PC-9 (cell line): ENCODE measurements at regions of chr18 and their contacts with region 1.

Region 1: DNA sequence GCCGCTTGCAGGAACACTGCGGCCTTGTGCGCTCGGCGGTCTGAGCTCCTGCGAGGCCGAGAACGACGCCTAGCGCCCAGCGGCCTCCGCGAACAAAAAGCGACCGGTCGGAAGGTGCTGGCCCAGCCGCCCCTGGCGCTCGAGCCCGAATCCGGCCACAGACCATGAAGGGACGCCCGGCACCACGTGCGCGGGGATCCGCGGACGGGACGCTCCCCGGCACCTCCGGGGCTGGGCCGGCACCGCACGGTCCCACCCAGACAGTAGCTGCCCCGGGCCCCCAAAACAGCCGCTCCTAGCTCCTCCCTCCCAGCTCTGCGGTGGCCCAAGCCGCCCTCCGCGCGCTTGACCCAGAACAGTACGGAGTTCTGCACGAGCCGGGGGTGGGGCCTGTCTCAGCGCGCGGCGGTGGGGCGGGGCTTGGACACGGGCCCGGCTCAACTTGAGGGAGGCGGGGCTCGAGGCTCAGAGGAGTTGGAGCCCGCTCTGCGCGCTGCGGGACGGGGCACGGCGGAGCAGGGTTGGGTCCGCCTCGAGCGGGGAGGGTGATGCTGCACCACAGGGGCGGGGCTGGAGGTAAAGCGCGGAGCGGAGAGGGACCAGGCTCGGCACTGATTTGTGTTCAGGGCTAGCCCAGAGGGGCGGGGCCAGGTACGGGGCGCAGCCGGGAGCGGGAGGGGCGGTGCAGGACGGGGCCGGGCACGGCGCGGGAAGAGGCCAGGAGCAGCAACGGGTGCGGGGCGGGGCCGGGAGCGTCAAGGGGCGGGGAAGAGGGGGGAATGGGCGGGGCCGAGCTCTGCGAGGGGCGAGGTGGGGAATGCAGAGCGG is 538 bp upstream of the IMPA2 start:
- DNase-seq: peak; percentile 95 to 100
- H3K4me3 ChIP-seq: peak overlapping the region; percentile 69
- H3K27ac ChIP-seq: peak overlapping the region; percentile 84
- H3K4me1 ChIP-seq: peaks cover 31% of the 10 kb centered on the region
- H3K27me3 ChIP-seq: no peaks in the 10 kb centered on the region
- CTCF ChIP-seq: no peak

Region 2: DNA sequence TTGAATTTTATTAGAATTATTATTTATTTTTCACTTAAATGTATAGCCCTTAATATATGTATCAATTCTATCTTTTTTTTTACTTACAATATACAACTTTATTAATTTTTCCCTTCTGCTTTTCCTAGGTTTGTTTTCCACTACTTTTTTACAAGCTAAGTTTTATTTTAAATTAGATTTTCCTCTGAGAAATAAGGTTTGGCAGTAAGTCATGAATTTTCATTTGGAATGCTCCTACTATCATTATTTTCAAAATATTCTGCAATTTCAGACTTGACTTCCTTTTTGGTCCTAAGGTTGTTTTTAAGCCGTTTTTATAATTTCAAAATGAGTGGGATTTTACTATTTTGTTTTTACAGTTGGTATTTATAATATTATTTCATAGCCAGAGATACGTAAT is 608.6 kb before region 1 on chr18:
- CTCF ChIA-PET with region 1: no interaction called
- POLR2A ChIA-PET with region 1: interaction called, 10 read pairs
- intact Hi-C with region 1: no loop called
- DNase-seq: no peak
- H3K4me3 ChIP-seq: no peak overlapping the region
- H3K27ac ChIP-seq: no peak overlapping the region
- H3K4me1 ChIP-seq: no peaks in the 10 kb centered on the region
- H3K27me3 ChIP-seq: peaks cover 21% of the 10 kb centered on the region
- CTCF ChIP-seq: no peak

Region 3: GRCh38 chr18:11887305-11888262 is 93.2 kb before region 1 on chr18:
- CTCF ChIA-PET with region 1: interaction called, 11 read pairs
- POLR2A ChIA-PET with region 1: interaction called, 5 read pairs
- intact Hi-C with region 1: no loop called
- DNase-seq: peak; percentile 61 to 95
- H3K4me3 ChIP-seq: no peak overlapping the region
- H3K27ac ChIP-seq: peak overlapping the region; percentile 60
- H3K4me1 ChIP-seq: peaks cover 24% of the 10 kb centered on the region
- H3K27me3 ChIP-seq: no peaks in the 10 kb centered on the region
- CTCF ChIP-seq: no peak

Region 4: GRCh38 chr18:11937874-11938478 is 42.8 kb before region 1 on chr18:
- CTCF ChIA-PET with region 1: interaction called, 15 read pairs
- POLR2A ChIA-PET with region 1: interaction called, 20 read pairs
- intact Hi-C with region 1: no loop called
- DNase-seq: peak; percentile 61 to 70
- H3K4me3 ChIP-seq: no peak overlapping the region
- H3K27ac ChIP-seq: no peak overlapping the region
- H3K4me1 ChIP-seq: no peaks in the 10 kb centered on the region
- H3K27me3 ChIP-seq: no peaks in the 10 kb centered on the region
- CTCF ChIP-seq: peak; percentile 85

Region 5: DNA sequence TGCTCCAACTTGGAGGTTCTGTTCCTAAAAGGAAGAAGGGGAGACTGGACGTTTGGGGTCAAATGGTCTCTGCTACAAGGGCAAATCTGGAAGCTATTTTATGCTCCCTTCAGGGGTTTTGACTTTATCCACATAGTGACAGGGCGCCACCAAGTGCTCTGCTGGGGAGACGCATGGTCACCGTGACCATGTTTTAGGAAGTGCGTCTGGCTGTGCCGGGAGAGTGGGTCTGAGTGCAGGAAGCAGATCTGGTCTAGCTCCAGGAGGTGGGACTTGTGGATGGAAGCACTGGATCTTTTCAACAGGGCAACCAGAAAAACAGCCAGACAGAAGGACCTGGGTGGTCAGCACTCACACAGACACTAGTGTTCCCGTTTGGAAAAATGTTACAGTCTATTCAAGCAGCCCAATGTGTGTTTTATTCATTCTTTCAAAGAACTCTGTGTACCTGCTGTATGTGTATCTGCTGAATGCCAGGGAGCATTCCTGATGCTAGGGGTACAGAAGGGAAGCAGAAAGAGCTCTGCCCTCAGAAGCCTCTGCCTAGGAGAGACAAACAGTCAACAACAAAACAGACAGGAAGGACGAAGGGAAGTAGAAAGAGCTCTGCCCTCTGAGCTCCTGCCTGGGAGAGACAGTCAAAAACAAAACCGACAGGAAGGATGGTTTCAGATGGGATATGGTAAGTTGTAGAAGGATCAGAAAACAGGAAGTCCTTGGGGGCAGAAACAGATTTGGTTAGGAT is 14.8 kb after region 1 on chr18:
- CTCF ChIA-PET with region 1: interaction called, 12 read pairs
- POLR2A ChIA-PET with region 1: interaction called, 5 read pairs
- intact Hi-C with region 1: no loop called
- DNase-seq: peak; percentile 49 to 70
- H3K4me3 ChIP-seq: no peak overlapping the region
- H3K27ac ChIP-seq: no peak overlapping the region
- H3K4me1 ChIP-seq: peaks cover 17% of the 10 kb centered on the region
- H3K27me3 ChIP-seq: no peaks in the 10 kb centered on the region
- CTCF ChIP-seq: peak; percentile 84

Region 6: DNA sequence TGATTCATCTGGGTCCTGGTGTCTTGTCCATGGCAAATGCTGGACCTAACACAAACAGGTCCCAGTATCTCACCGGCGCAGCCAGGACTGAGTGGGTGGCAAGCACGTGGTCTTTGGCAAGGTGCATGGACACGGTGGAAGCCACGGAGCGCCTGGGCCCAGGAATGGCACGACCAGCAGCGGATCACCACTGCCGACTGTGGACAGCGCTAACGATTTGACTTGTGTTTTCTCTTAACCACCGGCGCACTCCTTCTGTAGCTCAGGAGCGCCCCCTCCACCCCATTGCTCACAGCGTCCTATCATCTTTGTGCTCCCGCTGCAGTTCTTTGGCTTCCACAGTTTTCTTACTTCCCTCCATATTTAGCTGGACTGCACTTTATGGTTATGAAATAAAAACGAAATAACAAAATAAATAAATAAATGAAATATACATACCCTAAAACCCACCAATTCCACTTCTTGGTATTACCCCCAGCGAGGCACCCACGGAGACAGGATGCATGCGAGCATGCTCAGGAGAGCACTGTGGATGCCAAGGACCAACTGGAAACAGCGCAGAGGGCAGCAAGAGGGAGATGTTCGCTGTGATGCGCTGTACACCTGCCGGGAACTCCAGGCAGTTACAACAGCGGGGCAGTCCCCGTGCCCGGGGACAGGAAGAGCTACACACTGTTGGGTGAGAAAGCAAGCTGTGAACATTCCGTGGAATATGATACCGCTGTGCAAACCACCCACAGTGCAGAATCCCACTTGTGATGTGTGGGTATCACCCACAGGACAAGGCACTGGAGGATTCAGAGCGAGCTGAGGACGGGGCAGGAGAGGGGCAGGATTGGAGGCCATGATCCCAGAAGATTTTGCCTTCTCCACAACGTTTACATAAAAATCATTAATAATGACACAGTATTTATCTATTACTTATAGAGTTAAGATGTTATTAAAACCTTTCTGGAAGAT is 266.4 kb after region 1 on chr18:
- CTCF ChIA-PET with region 1: no interaction called
- POLR2A ChIA-PET with region 1: no interaction called
- intact Hi-C with region 1: no loop called
- DNase-seq: no peak
- H3K4me3 ChIP-seq: no peak overlapping the region
- H3K27ac ChIP-seq: no peak overlapping the region
- H3K4me1 ChIP-seq: no peaks in the 10 kb centered on the region
- H3K27me3 ChIP-seq: no peaks in the 10 kb centered on the region
- CTCF ChIP-seq: no peak

Region 7: DNA sequence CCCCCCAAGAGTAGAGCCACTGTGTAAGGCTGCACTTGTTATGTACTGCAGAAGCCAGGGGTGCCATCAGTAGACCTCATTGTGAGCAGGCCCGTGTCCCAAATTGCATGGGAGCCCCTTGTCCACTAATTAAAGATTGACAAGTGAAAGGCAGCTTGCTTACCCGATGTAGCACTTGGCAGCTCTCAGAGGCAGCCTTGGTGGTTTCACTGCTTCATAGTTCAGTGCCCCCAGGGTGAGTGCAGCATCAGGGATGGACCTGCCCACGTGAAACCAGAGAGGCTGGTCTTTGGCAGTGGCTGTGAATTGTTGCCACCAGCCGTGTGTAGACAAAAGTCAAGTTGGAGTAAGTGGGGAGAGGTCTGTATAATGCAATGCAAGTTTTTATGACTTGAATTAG is 340.6 kb after region 1 on chr18:
- CTCF ChIA-PET with region 1: no interaction called
- POLR2A ChIA-PET with region 1: interaction called, 16 read pairs
- intact Hi-C with region 1: no loop called
- DNase-seq: no peak
- H3K4me3 ChIP-seq: no peak overlapping the region
- H3K27ac ChIP-seq: no peak overlapping the region
- H3K4me1 ChIP-seq: no peaks in the 10 kb centered on the region
- H3K27me3 ChIP-seq: no peaks in the 10 kb centered on the region
- CTCF ChIP-seq: no peak